Lower lobe of right lung (tissue), 2 donors: ENCODE measurements at regions of chr12 and their contacts with region 1.

Region 1: GRCh38 chr12:104215638-104216297 is at the start of gene TXNRD1:
- DNase-seq: peak; percentile 92
- ATAC-seq: peak; percentile 95 to 96
- H3K4me3 ChIP-seq: peak within 1 kb of the TSS; percentile 60
- H3K27ac ChIP-seq: peak within 1 kb of the TSS; percentile 78
- H3K4me1 ChIP-seq: peaks cover 37% of the 10 kb centered on the region
- H3K27me3 ChIP-seq: no peaks in the 10 kb centered on the region
- CTCF ChIP-seq: peak; percentile 94
- total RNA-seq, gene TXNRD1: 144 TPM

Region 2: GRCh38 chr12:104286538-104287482 is 71.0 kb after region 1 on chr12:
- intact Hi-C with region 1: loop called (anchors 5 kb)
- DNase-seq: peak; percentile 94
- ATAC-seq: peak; percentile 94
- H3K4me3 ChIP-seq: peak overlapping the region; percentile 82
- H3K27ac ChIP-seq: peak overlapping the region; percentile 93
- H3K4me1 ChIP-seq: peaks cover 40% of the 10 kb centered on the region
- H3K27me3 ChIP-seq: no peaks in the 10 kb centered on the region
- CTCF ChIP-seq: no peak

Region 3: GRCh38 chr12:104358347-104359003 is 142.7 kb after region 1 on chr12:
- intact Hi-C with region 1: loop called (anchors 10 kb)
- DNase-seq: peak; percentile 73
- ATAC-seq: peak; percentile 89 to 92
- H3K4me3 ChIP-seq: no peak overlapping the region
- H3K27ac ChIP-seq: no peak overlapping the region
- H3K4me1 ChIP-seq: no peaks in the 10 kb centered on the region
- H3K27me3 ChIP-seq: no peaks in the 10 kb centered on the region
- CTCF ChIP-seq: peak; percentile 85